K562 (cell line): ENCODE measurements at regions of chr7 and their contacts with region 1.

Region 1: DNA sequence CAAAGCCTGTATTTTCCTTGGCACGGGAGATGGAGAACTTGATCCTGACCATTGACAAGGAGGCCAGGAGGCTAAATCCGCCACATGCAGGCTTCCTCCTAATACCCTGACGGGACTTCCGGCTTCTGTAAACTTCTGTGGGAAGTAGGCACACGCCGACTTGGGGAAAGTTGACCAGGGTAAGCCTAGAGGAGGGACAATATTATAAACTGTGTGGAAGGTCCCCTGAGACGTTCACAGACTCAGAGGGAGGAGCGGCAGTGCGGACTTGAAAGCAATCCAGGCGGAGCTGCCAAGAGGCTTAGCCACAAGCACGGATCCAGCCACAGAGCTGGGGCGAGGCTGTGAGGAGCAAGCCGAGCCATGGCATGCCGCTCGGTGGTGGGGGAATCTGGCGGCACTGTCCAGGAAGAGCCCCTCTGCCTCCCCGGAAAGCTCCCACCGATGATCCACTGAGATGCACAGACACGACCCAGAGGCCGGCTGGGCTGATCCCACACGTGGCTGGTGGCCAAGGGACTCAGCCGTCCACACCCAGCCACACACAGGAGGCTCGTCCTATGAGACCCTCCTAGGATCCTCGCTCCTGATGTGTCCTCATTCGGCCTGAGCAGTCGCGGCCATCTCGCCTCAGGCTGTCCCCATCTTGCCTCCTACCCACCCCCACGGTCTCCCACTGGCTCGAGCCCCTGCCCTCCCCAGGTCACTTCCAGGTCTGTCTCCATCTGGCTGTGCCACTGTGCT is 40.0 kb upstream of the INSIG1 start:
- DNase-seq: no peak
- ATAC-seq: peak; percentile 10; the same call in 2 of the 3 replicates
- H3K4me3 ChIP-seq: no peak overlapping the region
- H3K27ac ChIP-seq: no peak overlapping the region
- H3K4me1 ChIP-seq: peaks cover 0 to 11% of the 10 kb centered on the region in 2 experiments; a peak in 3 of 5 replicates
- H3K27me3 ChIP-seq: peaks cover 85 to 88% of the 10 kb centered on the region in 2 experiments
- CTCF ChIP-seq: no peak
- EP300 ChIP-seq: no peak
- POLR2A ChIP-seq: no peak
- RAD21 ChIP-seq: no peak

Region 2: GRCh38 chr7:154827007-154827406 is 430.6 kb before region 1 on chr7:
- CTCF ChIA-PET with region 1: no interaction called
- POLR2A ChIA-PET with region 1: no interaction called
- in situ Hi-C with region 1: no loop called
- intact Hi-C with region 1: no loop called
- DNase-seq: no peak
- ATAC-seq: no peak
- H3K4me3 ChIP-seq: no peak overlapping the region
- H3K27ac ChIP-seq: no peak overlapping the region
- H3K4me1 ChIP-seq: no peaks in the 10 kb centered on the region
- H3K27me3 ChIP-seq: peaks cover 24 to 46% of the 10 kb centered on the region in 2 experiments
- CTCF ChIP-seq: no peak
- EP300 ChIP-seq: no peak
- POLR2A ChIP-seq: no peak
- RAD21 ChIP-seq: no peak

Region 3: GRCh38 chr7:155141562-155141961 is 116.1 kb before region 1 on chr7:
- CTCF ChIA-PET with region 1: no interaction called
- POLR2A ChIA-PET with region 1: no interaction called
- in situ Hi-C with region 1: no loop called
- intact Hi-C with region 1: no loop called
- DNase-seq: no peak
- ATAC-seq: no peak
- H3K4me3 ChIP-seq: no peak overlapping the region
- H3K27ac ChIP-seq: no peak overlapping the region
- H3K4me1 ChIP-seq: no peaks in the 10 kb centered on the region
- H3K27me3 ChIP-seq: peaks cover 9 to 40% of the 10 kb centered on the region in 2 experiments
- CTCF ChIP-seq: no peak
- EP300 ChIP-seq: no peak
- POLR2A ChIP-seq: no peak
- RAD21 ChIP-seq: no peak

Region 4: GRCh38 chr7:155163696-155164095 is 94.0 kb before region 1 on chr7:
- CTCF ChIA-PET with region 1: no interaction called
- POLR2A ChIA-PET with region 1: no interaction called
- in situ Hi-C with region 1: no loop called
- intact Hi-C with region 1: no loop called
- DNase-seq: no peak
- ATAC-seq: no peak
- H3K4me3 ChIP-seq: no peak overlapping the region
- H3K27ac ChIP-seq: no peak overlapping the region
- H3K4me1 ChIP-seq: peaks cover 0 to 12% of the 10 kb centered on the region in 2 experiments; a peak in 1 of 5 replicates
- H3K27me3 ChIP-seq: peaks cover 42 to 57% of the 10 kb centered on the region in 2 experiments
- CTCF ChIP-seq: no peak
- EP300 ChIP-seq: no peak
- POLR2A ChIP-seq: no peak
- RAD21 ChIP-seq: no peak

Region 5: DNA sequence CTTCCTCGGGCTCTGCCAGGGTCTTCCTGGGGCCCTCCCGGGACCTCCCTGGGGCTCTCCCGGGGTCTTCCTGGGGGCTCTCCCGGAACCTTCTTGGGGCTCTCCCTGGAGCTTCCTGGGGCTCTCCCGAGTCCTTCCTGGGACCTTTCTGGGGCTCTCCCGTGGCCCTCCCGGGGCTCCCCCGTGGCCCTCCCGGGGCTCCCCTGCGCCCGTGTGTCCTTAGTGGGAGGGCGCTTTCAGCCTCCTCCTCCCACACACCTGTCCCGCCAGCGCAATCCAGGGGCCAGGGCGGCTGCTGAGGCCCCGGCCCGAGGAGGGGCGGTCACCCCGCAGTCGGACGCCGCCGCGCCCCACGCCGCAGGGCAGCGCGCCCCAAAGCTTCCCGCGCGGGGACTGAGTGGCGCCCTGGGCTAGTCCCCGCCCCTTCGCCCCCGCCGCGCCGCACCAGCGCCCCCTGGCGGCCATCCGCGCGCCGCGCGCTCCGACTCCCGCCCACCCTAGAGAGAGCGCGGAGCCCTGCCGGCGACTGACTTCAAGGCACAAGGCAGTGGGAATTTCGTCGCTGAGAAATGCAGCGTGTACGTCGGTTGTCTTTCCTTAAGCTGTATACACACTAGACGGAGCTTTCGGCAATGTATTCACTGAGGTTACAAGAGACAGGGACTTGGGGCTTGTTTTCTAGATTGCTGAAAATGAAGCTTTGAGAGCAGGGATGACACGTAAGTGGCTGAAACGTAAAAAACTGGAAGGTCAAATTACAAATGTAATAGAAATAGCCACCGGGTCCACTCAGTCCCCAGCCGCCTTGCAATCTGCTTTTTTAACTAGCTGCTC is 87.2 kb after region 1 on chr7:
- CTCF ChIA-PET with region 1: no interaction called
- POLR2A ChIA-PET with region 1: no interaction called
- in situ Hi-C with region 1: no loop called
- intact Hi-C with region 1: loop called (anchors 5 kb)
- DNase-seq: peak; percentile 90 to 99 (median 96)
- ATAC-seq: peak; percentile 98
- H3K4me3 ChIP-seq: peak overlapping the region; percentile 46
- H3K27ac ChIP-seq: no peak overlapping the region
- H3K4me1 ChIP-seq: peaks cover 0 to 17% of the 10 kb centered on the region in 2 experiments; a peak in 3 of 5 replicates
- H3K27me3 ChIP-seq: peaks cover 29 to 48% of the 10 kb centered on the region in 2 experiments
- CTCF ChIP-seq: peak; percentile 86 to 97 (median 96)
- EP300 ChIP-seq: no peak
- POLR2A ChIP-seq: no peak
- RAD21 ChIP-seq: peak; percentile 95 to 96